Psoas muscle (tissue), 8 donors: ENCODE measurements at regions of chr14 and their contacts with region 1.

Region 1: GRCh38 chr14:81211844-81212243 is 8.9 kb downstream of the GTF2A1 start:
- DNase-seq: peak; percentile 35 to 74
- ATAC-seq: peak; percentile 72 to 93 (median 88)
- H3K4me3 ChIP-seq: no peak overlapping the region
- H3K27ac ChIP-seq: no peak overlapping the region
- H3K4me1 ChIP-seq: peaks cover 28% of the 10 kb centered on the region
- H3K27me3 ChIP-seq: no peaks in the 10 kb centered on the region
- CTCF ChIP-seq: peak; percentile 59

Region 2: GRCh38 chr14:80954687-80955299 is 257.1 kb before region 1 on chr14:
- intact Hi-C with region 1: loop called (anchors 5 to 10 kb)
- DNase-seq: peak; percentile 80 to 86
- ATAC-seq: peak; percentile 93 to 98 (median 96)
- H3K4me3 ChIP-seq: peak overlapping the region; percentile 73
- H3K27ac ChIP-seq: no peak overlapping the region
- H3K4me1 ChIP-seq: peaks cover 5% of the 10 kb centered on the region
- H3K27me3 ChIP-seq: no peaks in the 10 kb centered on the region
- CTCF ChIP-seq: peak; percentile 84

Region 3: GRCh38 chr14:80987235-80988032 is 224.4 kb before region 1 on chr14:
- intact Hi-C with region 1: loop called in 1 of 2 experiments (anchors 5 kb)
- DNase-seq: peak; percentile 17 to 57
- ATAC-seq: peak; percentile 81 to 95 (median 85)
- H3K4me3 ChIP-seq: no peak overlapping the region
- H3K27ac ChIP-seq: no peak overlapping the region
- H3K4me1 ChIP-seq: no peaks in the 10 kb centered on the region
- H3K27me3 ChIP-seq: no peaks in the 10 kb centered on the region
- CTCF ChIP-seq: peak; percentile 96

Region 4: GRCh38 chr14:80996049-80996901 is 215.6 kb before region 1 on chr14:
- intact Hi-C with region 1: loop called in 1 of 2 experiments (anchors 2 kb)
- DNase-seq: no peak
- ATAC-seq: peak; percentile 85 to 99 (median 96)
- H3K4me3 ChIP-seq: peak overlapping the region; percentile 33
- H3K27ac ChIP-seq: no peak overlapping the region
- H3K4me1 ChIP-seq: no peaks in the 10 kb centered on the region
- H3K27me3 ChIP-seq: no peaks in the 10 kb centered on the region
- CTCF ChIP-seq: peak; percentile 71

Region 5: DNA sequence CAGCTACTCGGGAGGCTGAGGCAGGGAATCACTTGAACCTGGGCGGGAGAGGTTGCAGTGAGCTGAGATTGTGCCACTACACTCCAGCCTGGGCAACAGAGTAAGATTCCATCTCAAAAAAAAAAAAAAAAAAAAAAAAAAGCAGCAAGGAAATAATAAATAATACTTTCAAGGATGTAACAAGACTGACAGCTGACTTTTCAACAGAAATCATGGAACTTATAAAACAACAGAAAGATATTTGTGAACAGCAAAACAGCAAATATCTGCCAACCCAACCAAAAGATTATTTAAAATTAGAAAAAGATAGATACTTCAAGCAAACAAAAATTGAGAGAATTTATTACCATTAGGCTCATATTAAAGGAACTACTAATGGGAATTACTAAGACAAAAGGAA is 141.3 kb before region 1 on chr14:
- intact Hi-C with region 1: no loop called
- DNase-seq: no peak
- ATAC-seq: no peak
- H3K4me3 ChIP-seq: no peak overlapping the region
- H3K27ac ChIP-seq: no peak overlapping the region
- H3K4me1 ChIP-seq: no peaks in the 10 kb centered on the region
- H3K27me3 ChIP-seq: no peaks in the 10 kb centered on the region
- CTCF ChIP-seq: no peak

Region 6: GRCh38 chr14:81170104-81170828 is 41.6 kb before region 1 on chr14:
- intact Hi-C with region 1: loop called in 1 of 2 experiments (anchors 5 kb)
- DNase-seq: peak; percentile 94 to 97
- ATAC-seq: peak; percentile 99
- H3K4me3 ChIP-seq: peak overlapping the region; percentile 89
- H3K27ac ChIP-seq: peak overlapping the region; percentile 89
- H3K4me1 ChIP-seq: peaks cover 16% of the 10 kb centered on the region
- H3K27me3 ChIP-seq: no peaks in the 10 kb centered on the region
- CTCF ChIP-seq: peak; percentile 89